ENCODE measurements at regions of chr18 and their contacts with region 1.

Region 1: GRCh38 chr18:23703057-23703986 is 14.1 kb downstream of the LAMA3 start:
- DNase-seq: peak in 1 of 2 experiments; percentile 49
- H3K4me3 ChIP-seq: no peak overlapping the region
- H3K4me3 Mint-ChIP-seq: no peak overlapping the region
- H3K27ac Mint-ChIP-seq: no peak overlapping the region
- H3K4me1 ChIP-seq: no peaks in the 10 kb centered on the region
- H3K4me1 Mint-ChIP-seq: peaks cover 14% of the 10 kb centered on the region
- H3K27me3 ChIP-seq: no peaks in the 10 kb centered on the region
- H3K27me3 Mint-ChIP-seq: no peaks in the 10 kb centered on the region
- CTCF ChIP-seq: peak; percentile 27 to 32

Region 2: GRCh38 chr18:23586249-23587196 is 116.8 kb before region 1 on chr18 and contains the start of gene NPC1:
- CTCF ChIA-PET with region 1: no interaction called
- POLR2A ChIA-PET with region 1: no interaction called
- intact Hi-C with region 1: loop called (anchors 1 kb)
- DNase-seq: peak; percentile 91 to 94
- H3K4me3 ChIP-seq: peak within 1 kb of the TSS; percentile 80
- H3K4me3 Mint-ChIP-seq: peak within 1 kb of the TSS; percentile 78
- H3K27ac Mint-ChIP-seq: peak within 1 kb of the TSS; percentile 88
- H3K4me1 ChIP-seq: no peaks in the 10 kb centered on the region
- H3K4me1 Mint-ChIP-seq: no peaks in the 10 kb centered on the region
- H3K27me3 ChIP-seq: no peaks in the 10 kb centered on the region
- H3K27me3 Mint-ChIP-seq: no peaks in the 10 kb centered on the region
- CTCF ChIP-seq: peak; percentile 69 to 70
- total RNA-seq, gene NPC1: 29.5 and 32.8 TPM in 2 replicates

Region 3: DNA sequence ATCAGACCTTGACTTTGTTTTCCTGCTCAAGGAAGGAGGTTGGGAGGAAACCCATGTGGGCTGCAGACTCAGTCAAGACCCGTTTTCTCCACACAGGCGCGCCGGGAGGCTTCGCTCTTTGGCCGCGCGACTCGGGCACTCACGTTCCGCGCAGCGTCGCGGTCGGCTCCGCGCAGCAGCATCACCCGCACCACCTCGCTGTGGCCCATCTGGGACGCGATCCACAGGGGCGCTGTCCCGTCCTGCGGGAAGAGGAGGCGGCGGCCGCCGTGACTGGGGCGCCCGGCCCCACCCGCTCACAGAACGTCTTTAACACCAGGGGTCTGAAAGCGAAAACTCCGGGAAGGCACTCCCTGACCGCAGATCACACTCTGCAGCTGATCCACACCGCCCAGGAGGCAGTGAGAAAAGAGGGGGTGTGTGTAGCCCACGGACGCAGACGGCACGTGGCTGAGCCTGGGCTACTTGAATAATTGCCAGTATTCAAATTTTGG is 83.9 kb before region 1 on chr18:
- CTCF ChIA-PET with region 1: interaction called, 11 read pairs
- POLR2A ChIA-PET with region 1: no interaction called
- intact Hi-C with region 1: loop called (anchors 1 kb)
- DNase-seq: no peak
- H3K4me3 ChIP-seq: peak overlapping the region; percentile 16
- H3K4me3 Mint-ChIP-seq: no peak overlapping the region
- H3K27ac Mint-ChIP-seq: no peak overlapping the region
- H3K4me1 ChIP-seq: 0 out of 2 replicates have a peak, but pooled peaks cover 7% of the 10 kb centered on the region
- H3K4me1 Mint-ChIP-seq: peaks cover 8% of the 10 kb centered on the region
- H3K27me3 ChIP-seq: no peaks in the 10 kb centered on the region
- H3K27me3 Mint-ChIP-seq: no peaks in the 10 kb centered on the region
- CTCF ChIP-seq: no peak

Region 4: GRCh38 chr18:23629444-23629946 is 73.8 kb before region 1 on chr18:
- CTCF ChIA-PET with region 1: interaction called, 14 read pairs
- POLR2A ChIA-PET with region 1: no interaction called
- intact Hi-C with region 1: no loop called
- DNase-seq: peak; percentile 50 to 58
- H3K4me3 ChIP-seq: no peak overlapping the region
- H3K4me3 Mint-ChIP-seq: no peak overlapping the region
- H3K27ac Mint-ChIP-seq: no peak overlapping the region
- H3K4me1 ChIP-seq: peaks cover 10% of the 10 kb centered on the region
- H3K4me1 Mint-ChIP-seq: no peaks in the 10 kb centered on the region
- H3K27me3 ChIP-seq: no peaks in the 10 kb centered on the region
- H3K27me3 Mint-ChIP-seq: no peaks in the 10 kb centered on the region
- CTCF ChIP-seq: no peak

Region 5: DNA sequence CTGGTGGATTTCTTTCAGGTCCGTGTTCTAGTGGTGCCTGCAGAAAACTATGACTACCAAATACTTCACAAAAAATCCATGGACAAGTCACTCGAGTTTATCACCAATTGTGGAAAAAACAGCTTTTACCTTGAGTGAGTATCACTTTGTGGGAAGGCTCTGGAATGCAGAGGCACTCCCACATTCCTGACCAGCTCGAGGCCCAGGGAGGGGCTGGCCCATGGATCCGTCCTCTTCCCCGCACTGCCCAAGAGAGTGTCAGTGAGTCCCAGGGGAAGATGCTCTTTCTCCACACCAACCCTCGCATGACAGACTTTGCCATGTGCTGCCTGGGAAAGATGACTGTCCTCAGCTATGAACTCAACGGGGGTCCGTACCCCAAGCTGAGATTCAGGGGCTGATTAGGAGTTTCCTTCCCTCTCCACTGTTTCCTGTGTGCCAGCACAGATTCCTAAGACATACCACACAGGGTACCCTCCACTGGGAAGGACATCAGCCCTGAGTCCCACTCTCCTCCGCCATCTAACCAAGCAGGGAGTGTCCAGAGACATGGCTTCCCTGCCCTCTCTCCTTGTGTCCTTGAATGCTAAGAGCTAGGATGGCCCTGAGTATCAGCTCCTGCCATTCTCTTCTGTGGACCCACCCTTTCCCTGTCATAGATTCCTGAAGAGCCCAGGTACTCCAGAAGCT is 141.8 kb after region 1 on chr18:
- CTCF ChIA-PET with region 1: no interaction called
- POLR2A ChIA-PET with region 1: no interaction called
- intact Hi-C with region 1: no loop called
- DNase-seq: peak; percentile 17 to 52
- H3K4me3 ChIP-seq: no peak overlapping the region
- H3K4me3 Mint-ChIP-seq: no peak overlapping the region
- H3K27ac Mint-ChIP-seq: peak overlapping the region; percentile 77
- H3K4me1 ChIP-seq: 0 out of 2 replicates have a peak, but pooled peaks cover 4% of the 10 kb centered on the region
- H3K4me1 Mint-ChIP-seq: peaks cover 18% of the 10 kb centered on the region
- H3K27me3 ChIP-seq: no peaks in the 10 kb centered on the region
- H3K27me3 Mint-ChIP-seq: no peaks in the 10 kb centered on the region
- CTCF ChIP-seq: no peak

Measured in Caco-2 (cell line).